ENCODE measurements at regions of chr3 and their contacts with region 1.

Region 1: DNA sequence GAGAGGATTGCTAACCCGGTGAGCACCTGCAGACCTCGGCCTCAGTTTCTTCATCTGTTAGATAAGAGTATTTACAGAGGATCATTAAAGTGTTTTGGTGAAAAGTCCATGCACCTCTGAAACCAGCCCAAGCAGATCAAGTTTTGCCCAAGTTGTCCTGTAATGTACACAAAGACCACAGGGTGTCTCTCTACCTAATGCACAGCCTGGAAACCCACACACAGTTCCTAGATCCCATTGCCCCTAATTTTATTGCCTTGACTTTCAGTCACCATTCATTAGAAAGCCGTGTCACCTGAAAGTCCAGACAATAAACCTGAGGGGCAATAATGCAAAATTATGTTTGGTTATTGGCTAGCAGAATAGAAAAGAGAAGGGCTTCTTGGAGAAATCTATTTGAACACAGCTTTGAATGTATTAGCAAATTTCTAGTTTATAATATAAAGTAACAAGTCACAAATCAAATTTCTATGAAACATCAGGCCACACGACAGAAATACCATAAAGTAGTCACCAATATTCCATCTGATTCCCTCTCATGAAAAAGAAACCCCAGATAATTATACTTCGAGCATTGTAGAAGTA is 161.3 kb upstream of the SLC2A2 start:
- DNase-seq: no peak
- ATAC-seq: peak; percentile 57 to 71
- H3K4me3 ChIP-seq: no peak overlapping the region
- H3K27ac ChIP-seq: no peak overlapping the region
- H3K4me1 ChIP-seq: peaks cover 4% of the 10 kb centered on the region
- H3K27me3 ChIP-seq: no peaks in the 10 kb centered on the region

Region 2: GRCh38 chr3:171309906-171310359 is 122.1 kb after region 1 on chr3:
- intact Hi-C with region 1: loop called in 2 of 4 experiments (anchors 10 kb)
- DNase-seq: no peak
- ATAC-seq: peak in 1 of 2 donors; percentile 47
- H3K4me3 ChIP-seq: no peak overlapping the region
- H3K27ac ChIP-seq: no peak overlapping the region
- H3K4me1 ChIP-seq: no peaks in the 10 kb centered on the region
- H3K27me3 ChIP-seq: no peaks in the 10 kb centered on the region

Region 3: GRCh38 chr3:171459942-171460724 is 272.3 kb after region 1 on chr3 and contains the start of gene TNIK:
- intact Hi-C with region 1: loop called in 2 of 4 experiments (anchors 10 kb)
- DNase-seq: peak; percentile 91 to 97 (median 96)
- ATAC-seq: peak; percentile 98
- H3K4me3 ChIP-seq: peak within 1 kb of the TSS; percentile 70
- H3K27ac ChIP-seq: peak within 1 kb of the TSS; percentile 40
- H3K4me1 ChIP-seq: peaks cover 3% of the 10 kb centered on the region
- H3K27me3 ChIP-seq: no peaks in the 10 kb centered on the region
- total RNA-seq, gene TNIK: 17.1 to 27.4 (median 22.8) TPM

Region 4: GRCh38 chr3:171470714-171471227 is 283.0 kb after region 1 on chr3:
- intact Hi-C with region 1: loop called in 2 of 4 experiments (anchors 10 kb)
- DNase-seq: no peak
- ATAC-seq: no peak
- H3K4me3 ChIP-seq: no peak overlapping the region
- H3K27ac ChIP-seq: no peak overlapping the region
- H3K4me1 ChIP-seq: peaks cover 2% of the 10 kb centered on the region
- H3K27me3 ChIP-seq: no peaks in the 10 kb centered on the region

Region 5: DNA sequence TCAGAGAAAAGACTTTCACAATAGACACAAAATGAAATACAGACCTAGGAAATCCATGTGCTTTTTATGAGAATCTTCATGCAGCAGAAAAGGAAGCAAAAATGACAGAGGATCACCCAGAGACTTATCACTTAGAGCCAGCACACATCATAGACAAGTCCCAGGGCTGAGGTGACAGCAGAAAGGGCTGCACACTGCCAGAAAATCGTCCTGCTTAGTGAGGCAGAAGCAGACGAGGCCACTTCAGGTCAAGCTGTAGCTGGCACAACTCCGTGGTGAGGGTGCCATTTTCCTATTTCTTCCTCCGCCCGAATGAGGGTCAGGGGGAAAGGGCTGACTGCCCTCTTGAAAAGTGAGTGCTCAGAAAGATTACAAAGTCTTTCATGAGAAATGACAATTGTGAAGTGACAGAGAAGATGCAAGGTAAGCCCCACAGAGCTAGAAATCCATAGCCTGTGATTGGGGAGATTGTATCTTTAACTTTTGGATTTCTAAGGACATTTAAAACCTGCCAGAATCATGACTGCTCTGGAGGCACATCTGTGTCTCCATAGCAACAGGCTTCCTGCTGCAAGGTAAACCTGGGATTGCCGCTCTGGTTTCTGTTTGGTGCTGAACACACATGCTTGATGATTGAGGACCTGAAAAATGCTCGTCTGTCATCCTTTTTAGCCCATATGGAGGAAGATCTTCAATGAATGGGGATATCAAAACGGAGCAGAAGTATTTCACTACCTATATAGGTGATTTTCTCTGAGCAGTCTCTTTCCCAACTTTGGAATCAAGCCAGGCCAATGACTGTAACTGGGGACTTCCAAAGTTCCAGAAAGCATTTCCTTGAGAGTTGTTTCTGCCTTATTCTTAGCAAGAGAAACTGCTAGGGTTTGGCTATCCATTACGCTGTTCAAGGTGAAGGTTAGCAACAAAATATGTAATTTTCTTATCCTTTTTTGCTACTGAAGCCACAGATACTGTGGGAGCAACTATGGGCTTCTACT is 368.6 kb after region 1 on chr3:
- intact Hi-C with region 1: loop called in 1 of 4 experiments (anchors 10 kb)
- DNase-seq: peak; percentile 24 to 72 (median 71)
- ATAC-seq: peak; percentile 86 to 87
- H3K4me3 ChIP-seq: no peak overlapping the region
- H3K27ac ChIP-seq: no peak overlapping the region
- H3K4me1 ChIP-seq: no peaks in the 10 kb centered on the region
- H3K27me3 ChIP-seq: no peaks in the 10 kb centered on the region

Measured in right cardiac atrium (tissue), 5 donors.